AG04449 (cell line): ENCODE measurements at regions of chr4 and their contacts with region 1.

Region 1: DNA sequence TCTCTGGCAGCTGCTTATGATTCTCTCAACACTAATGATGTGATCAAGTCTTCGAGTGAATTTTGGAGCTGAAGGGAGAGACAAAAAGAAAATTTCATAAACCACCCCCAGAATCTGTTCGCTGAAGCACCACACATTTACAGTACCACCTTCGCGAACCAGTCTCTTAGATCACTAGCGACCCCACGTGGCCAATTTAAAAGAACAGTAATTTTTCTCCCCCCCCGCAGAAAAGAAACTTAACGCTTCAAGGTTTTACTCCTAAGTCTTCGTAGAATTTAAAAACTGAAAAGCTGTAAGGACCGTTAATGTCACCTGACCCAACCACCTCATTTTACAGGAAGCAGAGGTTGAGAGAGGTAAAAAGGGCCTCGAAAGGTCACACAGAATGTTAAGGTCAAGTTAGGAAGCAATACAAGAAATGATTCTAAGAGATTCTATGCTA is 187.5 kb downstream of the QDPR start:
- DNase-seq: peak; percentile 9
- H3K4me3 ChIP-seq: no peak overlapping the region
- CTCF ChIP-seq: peak; percentile 46

Region 2: GRCh38 chr4:16794816-16795445 is 529.5 kb before region 1 on chr4:
- CTCF ChIA-PET with region 1: interaction called, 34 read pairs
- POLR2A ChIA-PET with region 1: no interaction called
- DNase-seq: no peak
- H3K4me3 ChIP-seq: no peak overlapping the region
- CTCF ChIP-seq: peak; percentile 79

Region 3: DNA sequence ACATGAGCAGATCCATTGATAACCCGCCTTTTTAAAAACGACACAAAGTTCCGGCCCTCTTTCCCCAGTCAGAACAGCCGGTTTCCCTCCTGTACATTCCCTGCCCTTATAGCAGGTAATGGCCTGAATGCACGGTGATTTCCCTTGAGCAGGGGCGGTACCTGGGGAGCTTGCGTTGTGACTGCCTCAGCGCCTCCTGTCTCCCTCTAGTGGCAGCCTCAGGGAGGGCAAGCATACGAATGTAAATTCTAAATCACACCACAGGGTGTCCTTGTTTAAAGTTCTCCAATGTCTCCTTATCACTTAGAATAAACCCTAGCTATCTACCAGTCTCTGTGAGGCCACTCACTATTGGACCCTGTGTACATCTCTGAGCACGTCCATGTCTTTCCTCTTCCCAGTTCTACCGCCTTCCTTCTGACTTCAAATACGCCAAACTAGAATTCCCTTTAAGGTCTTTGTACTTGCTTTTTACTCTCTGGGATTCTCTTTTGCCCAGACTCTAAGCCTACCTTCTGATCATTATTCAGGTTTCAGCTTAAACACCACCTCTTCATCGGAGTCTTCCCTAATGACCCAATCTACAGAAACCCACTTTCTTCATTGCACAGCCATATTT is 407.6 kb before region 1 on chr4:
- CTCF ChIA-PET with region 1: interaction called, 17 read pairs
- POLR2A ChIA-PET with region 1: no interaction called
- DNase-seq: no peak
- H3K4me3 ChIP-seq: no peak overlapping the region
- CTCF ChIP-seq: peak; percentile 50

Region 4: GRCh38 chr4:17103231-17103630 is 221.2 kb before region 1 on chr4:
- CTCF ChIA-PET with region 1: interaction called, 10 read pairs
- POLR2A ChIA-PET with region 1: no interaction called
- DNase-seq: peak; percentile 90
- H3K4me3 ChIP-seq: no peak overlapping the region
- CTCF ChIP-seq: no peak

Region 5: DNA sequence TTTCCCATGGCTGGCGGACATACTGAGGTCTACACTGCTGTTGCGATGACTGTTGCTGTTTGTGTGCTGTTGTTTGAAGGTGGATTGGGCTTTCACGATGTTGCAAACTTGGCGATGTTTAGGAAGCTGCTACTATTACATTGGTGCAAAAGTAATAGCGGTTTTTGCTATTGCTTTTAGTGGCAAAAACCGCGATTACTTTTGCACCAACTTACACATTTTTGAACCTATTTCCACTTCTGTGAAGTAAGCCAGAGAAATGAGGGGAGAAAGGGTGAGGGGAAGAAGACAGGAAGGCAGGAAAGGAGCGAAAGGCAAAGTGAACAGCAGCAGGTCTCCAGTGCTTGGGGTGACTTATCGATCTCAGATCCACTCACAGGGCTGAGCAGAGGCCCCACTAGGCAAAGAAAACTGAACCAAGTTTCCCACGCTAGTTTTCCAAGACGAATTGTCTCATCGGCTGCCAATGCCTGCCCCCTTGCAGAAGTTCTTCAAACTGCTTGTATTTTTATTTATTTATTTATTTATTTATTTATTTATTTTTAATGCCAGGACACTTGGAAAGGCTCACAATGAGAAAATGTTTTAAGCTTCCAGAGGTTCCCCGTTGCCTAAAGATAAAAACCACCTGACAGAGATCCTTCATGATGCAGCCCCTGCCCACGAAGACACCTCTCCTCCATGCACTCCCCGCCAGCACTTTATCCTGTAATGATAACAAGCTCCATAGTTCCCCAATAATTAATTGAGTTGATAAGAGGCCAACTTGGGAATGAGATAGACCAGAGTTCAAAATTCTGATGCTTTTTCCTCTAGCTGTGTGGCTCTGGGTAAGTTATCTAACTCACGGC is 144.2 kb after region 1 on chr4:
- CTCF ChIA-PET with region 1: interaction called, 12 read pairs
- POLR2A ChIA-PET with region 1: no interaction called
- DNase-seq: no peak
- H3K4me3 ChIP-seq: no peak overlapping the region
- CTCF ChIP-seq: peak; percentile 51

Region 6: DNA sequence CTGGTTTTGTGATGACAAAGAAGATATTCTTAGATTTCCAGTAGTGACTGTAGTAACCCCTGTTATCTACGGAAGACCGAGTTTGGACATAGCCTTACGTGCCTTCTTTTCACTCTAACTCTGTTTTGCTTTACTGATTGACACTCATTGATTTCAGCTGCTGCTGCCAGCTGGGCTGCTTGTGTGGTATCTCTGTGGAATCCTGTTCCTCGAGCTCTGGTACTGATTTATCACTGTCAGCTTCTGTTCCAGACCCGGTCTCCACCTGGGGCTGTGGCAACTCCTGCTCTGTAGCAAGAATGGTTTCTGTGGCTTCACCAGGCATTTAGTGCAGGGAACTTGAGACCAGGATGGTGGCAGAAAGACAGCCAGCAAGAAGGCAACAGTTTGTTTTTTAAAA is 228.0 kb after region 1 on chr4:
- CTCF ChIA-PET with region 1: no interaction called
- POLR2A ChIA-PET with region 1: no interaction called
- DNase-seq: no peak
- H3K4me3 ChIP-seq: no peak overlapping the region
- CTCF ChIP-seq: no peak